ENCODE measurements at regions of chrX and their contacts with region 1.

Region 1: DNA sequence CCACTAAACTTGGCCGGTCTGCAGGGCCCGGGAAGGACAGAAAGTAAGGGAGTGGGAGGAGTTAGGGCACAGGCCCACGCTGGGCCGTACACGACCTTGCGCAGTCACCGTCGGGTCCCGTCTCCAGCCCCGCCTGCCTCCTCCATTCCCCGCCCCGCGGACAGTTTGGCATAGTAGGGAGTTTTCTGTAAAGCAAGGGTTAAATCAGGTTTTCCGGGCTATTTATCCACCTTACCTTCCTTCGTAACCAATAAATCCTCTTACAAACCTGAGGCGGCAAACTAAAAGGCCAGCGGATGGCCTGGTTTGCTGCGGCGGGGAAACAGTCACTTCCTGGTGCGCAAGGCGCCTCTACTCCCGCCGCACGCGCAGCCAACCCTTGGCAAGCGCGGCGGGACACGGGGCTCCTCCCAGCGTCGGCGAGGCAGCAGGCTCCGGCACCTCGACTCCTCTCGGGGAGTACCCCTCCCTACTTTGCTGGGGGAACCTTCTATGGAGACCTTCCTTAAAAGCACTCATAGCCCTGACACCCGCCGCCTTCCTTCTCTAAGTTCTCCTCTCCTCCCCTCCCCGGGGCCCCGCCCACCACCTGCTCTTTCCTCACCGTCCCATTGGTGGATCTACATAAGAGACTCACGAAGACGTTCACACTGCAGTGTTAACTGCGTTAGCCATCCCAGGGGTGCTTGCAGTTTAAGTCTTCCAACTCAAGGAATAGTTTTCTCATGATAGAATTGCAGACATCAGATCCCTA is at the start of gene TRMT2B:
- DNase-seq: peak; percentile 65
- ATAC-seq: peak; percentile 87
- H3K4me3 Mint-ChIP-seq: peak within 1 kb of the TSS; percentile 90
- H3K27ac Mint-ChIP-seq: peak within 1 kb of the TSS; percentile 93
- H3K4me1 Mint-ChIP-seq: peaks cover 25% of the 10 kb centered on the region
- H3K27me3 Mint-ChIP-seq: no peaks in the 10 kb centered on the region
- CTCF ChIP-seq: no peak
- total RNA-seq, gene TRMT2B: 28.8 and 37.9 TPM in 2 replicates

Region 2: DNA sequence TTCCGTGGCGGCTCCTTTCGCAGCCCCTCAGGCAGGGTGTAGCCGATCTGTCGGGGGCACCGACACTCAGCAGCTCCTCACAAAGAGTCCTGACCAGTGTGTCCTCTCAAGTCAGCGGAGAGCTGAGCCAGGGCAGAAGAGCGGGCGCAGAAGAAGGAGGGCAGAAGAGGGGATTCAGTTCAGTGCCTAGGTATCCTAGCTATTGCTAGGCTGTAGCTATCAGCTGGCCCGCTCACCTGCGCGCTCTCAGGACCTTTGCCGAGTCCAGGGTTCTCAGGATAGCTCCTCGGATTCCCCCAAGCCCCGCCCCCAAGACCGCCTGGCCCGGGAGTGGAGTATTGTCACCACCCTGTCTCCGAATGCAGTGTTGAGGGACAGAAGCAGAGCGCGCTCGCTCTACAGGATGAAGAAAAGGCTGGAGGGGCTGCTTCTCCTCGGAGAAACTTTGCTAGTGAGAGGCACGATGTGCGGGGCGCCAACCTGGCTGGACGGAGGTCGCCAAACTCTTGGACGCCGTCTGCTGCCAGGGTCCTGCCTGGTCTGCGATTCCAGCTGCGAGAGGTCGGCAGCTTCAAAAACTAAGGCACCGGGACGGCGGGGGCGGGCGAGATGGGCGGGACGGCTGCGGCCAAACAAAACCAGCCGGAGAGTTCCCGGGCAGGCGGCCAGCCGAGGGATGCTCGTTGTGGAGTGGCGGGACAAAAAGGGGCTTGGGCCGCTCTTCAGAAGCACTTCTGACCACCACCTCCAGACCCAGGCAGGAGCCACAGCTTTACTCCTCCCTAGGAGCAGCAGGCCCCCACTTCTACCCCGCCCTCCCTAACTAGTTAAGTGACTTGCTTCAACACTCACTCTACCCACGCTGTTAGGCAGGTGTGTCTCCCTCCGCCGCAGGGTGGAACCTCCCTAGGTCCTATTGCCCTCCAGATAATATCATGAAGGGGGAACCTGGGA is 122.8 kb before region 1 on chrX and contains the start of gene XKRX:
- CTCF ChIA-PET with region 1: no interaction called
- POLR2A ChIA-PET with region 1: no interaction called
- intact Hi-C with region 1: loop called (anchors 2 kb)
- DNase-seq: peak; percentile 23
- ATAC-seq: peak; percentile 71
- H3K4me3 Mint-ChIP-seq: peak within 1 kb of the TSS; percentile 94
- H3K27ac Mint-ChIP-seq: peak within 1 kb of the TSS; percentile 82
- H3K4me1 Mint-ChIP-seq: peaks cover 62% of the 10 kb centered on the region
- H3K27me3 Mint-ChIP-seq: no peaks in the 10 kb centered on the region
- CTCF ChIP-seq: no peak
- total RNA-seq, gene XKRX: 2.0 and 2.2 TPM in 2 replicates

Region 3: DNA sequence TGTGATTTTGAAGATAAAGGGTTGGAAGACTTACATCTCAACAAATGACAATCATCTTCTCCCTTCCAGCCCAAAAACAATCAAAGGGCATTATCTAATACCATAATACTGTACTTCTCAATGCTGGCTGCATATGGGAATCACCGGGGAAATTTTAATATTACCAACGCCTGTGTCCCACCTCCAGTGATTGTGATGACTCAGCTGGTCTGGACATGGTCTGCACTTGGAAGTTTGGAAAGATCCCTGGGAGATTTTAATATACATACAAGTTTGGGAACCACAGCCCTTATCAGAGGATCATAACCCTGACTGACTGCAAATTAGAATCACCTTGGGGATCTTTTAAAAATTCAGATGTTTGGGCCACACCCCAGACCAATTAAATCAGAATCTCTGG is 52.3 kb before region 1 on chrX:
- CTCF ChIA-PET with region 1: no interaction called
- POLR2A ChIA-PET with region 1: no interaction called
- intact Hi-C with region 1: no loop called
- DNase-seq: no peak
- ATAC-seq: no peak
- H3K4me3 Mint-ChIP-seq: no peak overlapping the region
- H3K27ac Mint-ChIP-seq: no peak overlapping the region
- H3K4me1 Mint-ChIP-seq: no peaks in the 10 kb centered on the region
- H3K27me3 Mint-ChIP-seq: no peaks in the 10 kb centered on the region
- CTCF ChIP-seq: no peak

Region 4: GRCh38 chrX:101171883-101172400 is 120.2 kb after region 1 on chrX:
- CTCF ChIA-PET with region 1: no interaction called
- POLR2A ChIA-PET with region 1: interaction called, 11 read pairs
- intact Hi-C with region 1: no loop called
- DNase-seq: no peak
- ATAC-seq: no peak
- H3K4me3 Mint-ChIP-seq: no peak overlapping the region
- H3K27ac Mint-ChIP-seq: no peak overlapping the region
- H3K4me1 Mint-ChIP-seq: no peaks in the 10 kb centered on the region
- H3K27me3 Mint-ChIP-seq: no peaks in the 10 kb centered on the region
- CTCF ChIP-seq: no peak

Region 5: DNA sequence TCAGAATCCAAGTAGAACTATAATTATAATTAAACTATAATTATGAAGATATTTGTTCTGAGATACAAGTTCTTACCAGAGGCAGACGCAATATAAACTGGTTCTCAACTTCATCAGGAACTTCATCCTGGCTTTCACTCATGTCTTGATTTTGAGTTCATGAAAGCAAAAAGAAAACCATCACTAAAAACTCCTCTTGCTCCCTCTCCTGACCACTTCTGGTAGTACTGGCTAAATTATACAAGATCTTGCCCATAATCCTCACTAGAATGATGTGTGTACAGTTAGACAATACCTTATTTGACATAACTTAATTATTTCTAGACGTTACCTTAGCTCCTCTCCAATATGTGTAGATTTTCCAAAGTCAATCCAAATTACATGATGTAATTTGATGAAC is 235.7 kb after region 1 on chrX:
- CTCF ChIA-PET with region 1: no interaction called
- POLR2A ChIA-PET with region 1: no interaction called
- intact Hi-C with region 1: loop called (anchors 5 kb)
- DNase-seq: no peak
- ATAC-seq: peak; percentile 57
- H3K4me3 Mint-ChIP-seq: no peak overlapping the region
- H3K27ac Mint-ChIP-seq: no peak overlapping the region
- H3K4me1 Mint-ChIP-seq: no peaks in the 10 kb centered on the region
- H3K27me3 Mint-ChIP-seq: peaks cover 1% of the 10 kb centered on the region
- CTCF ChIP-seq: no peak

Region 6: GRCh38 chrX:101407748-101408531 is 356.2 kb after region 1 on chrX and contains the starts of genes GLA and HNRNPH2:
- CTCF ChIA-PET with region 1: no interaction called
- POLR2A ChIA-PET with region 1: no interaction called
- intact Hi-C with region 1: loop called (anchors 5 kb)
- DNase-seq: peak; percentile 71
- ATAC-seq: peak; percentile 86
- H3K4me3 Mint-ChIP-seq: peak within 1 kb of the TSS; percentile 88
- H3K27ac Mint-ChIP-seq: peak within 1 kb of the TSS; percentile 99
- H3K4me1 Mint-ChIP-seq: peaks cover 37% of the 10 kb centered on the region
- H3K27me3 Mint-ChIP-seq: no peaks in the 10 kb centered on the region
- CTCF ChIP-seq: no peak
- total RNA-seq, gene GLA: 32.0 and 32.2 TPM in 2 replicates
- total RNA-seq, gene HNRNPH2: 70.5 and 76.9 TPM in 2 replicates